ENCODE measurements at regions of chr7 and their contacts with region 1.

Region 1: DNA sequence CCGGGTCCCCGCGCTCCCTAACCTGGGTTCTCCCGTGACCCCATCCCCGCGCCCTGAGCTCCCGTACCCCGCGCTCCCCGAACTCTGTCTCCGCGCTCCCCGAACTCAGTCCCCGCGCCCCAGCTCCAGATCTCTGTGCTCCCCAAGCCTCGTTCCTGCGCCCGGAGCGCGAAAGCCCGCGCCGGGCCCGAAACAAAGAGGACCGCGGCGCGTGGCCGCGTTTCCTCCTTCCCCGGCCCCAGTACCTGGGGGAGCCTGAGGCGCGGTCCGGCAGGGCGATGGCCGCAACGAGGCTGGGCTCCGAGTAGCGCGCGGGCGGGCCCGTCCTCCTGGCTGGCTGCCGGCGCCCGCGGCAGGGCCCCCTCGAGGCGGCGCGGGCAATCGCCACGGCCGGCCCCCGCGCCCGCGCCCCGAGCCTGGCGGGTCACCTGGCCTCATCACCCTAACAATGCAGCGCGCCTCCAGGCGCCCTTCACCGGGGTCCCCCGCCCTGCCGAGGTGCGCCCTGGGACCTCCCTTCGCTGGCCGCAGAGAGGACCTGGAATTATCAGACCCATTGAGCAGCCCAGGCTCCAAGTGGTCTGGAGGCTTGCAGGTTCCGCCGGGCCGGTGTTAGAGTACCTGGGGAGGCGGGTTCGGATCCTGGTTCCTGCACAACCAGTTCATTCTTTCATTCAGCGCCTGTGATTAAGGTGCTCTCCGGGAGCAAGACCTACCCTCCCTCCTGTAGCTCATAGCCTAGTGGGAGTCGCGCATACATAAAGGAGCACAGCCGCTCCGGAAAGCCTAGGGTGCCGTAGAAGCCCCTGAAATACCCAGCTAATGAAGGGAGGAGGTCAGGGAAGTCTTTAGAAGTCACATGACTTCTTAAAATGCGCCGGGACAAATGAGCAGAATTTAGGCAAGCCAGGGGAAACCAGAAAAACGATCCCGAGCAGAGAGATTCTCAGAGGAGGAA is at the start of gene TNS3:
- DNase-seq: peak in 1 of 2 donors; percentile 73
- H3K4me3 ChIP-seq: peak within 1 kb of the TSS; percentile 75 to 82
- H3K27ac ChIP-seq: peak within 1 kb of the TSS; percentile 85 to 88
- H3K4me1 ChIP-seq: peaks cover 14 to 58% of the 10 kb centered on the region in 2 donors
- H3K27me3 ChIP-seq: no peaks in the 10 kb centered on the region
- CTCF ChIP-seq: peak in 1 of 3 experiments; percentile 60
- total RNA-seq, gene TNS3: 89.8 TPM

Region 2: DNA sequence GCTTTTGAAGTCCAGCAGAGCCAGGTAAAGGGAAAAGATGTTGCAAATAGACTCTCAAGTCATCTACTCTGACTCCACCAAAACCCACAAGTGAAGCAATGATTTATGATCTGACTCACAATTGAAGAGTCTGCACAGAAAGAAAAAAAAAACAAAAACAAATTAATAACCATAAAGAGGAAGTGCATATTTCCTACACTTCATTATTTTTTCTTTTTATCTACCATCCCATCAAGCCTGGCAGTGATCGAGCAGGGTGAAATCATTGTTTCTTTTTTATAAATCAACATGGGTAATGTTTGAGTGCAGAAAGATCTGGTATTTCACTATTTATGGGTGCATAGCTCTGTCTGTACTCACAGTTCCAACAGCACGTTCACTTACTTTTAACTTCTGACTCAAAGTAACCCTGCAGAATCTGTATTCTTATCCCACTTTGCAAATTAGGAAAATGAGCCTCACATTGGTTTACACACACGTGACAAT is 829.2 kb before region 1 on chr7:
- intact Hi-C with region 1: no loop called
- DNase-seq: no peak
- H3K4me3 ChIP-seq: no peak overlapping the region
- H3K27ac ChIP-seq: peak overlapping the region; percentile 83 to 84
- H3K4me1 ChIP-seq: peaks cover 9 to 39% of the 10 kb centered on the region in 2 donors
- H3K27me3 ChIP-seq: no peaks in the 10 kb centered on the region
- CTCF ChIP-seq: no peak

Region 3: GRCh38 chr7:47482013-47482875 is 99.8 kb before region 1 on chr7:
- intact Hi-C with region 1: loop called (anchors 5 kb)
- DNase-seq: peak; percentile 56 to 87
- H3K4me3 ChIP-seq: peak overlapping the region in 1 of 2 donors; percentile 37
- H3K27ac ChIP-seq: peak overlapping the region; percentile 82 to 85
- H3K4me1 ChIP-seq: peaks cover 19 to 66% of the 10 kb centered on the region in 2 donors
- H3K27me3 ChIP-seq: no peaks in the 10 kb centered on the region
- CTCF ChIP-seq: no peak

Region 4: DNA sequence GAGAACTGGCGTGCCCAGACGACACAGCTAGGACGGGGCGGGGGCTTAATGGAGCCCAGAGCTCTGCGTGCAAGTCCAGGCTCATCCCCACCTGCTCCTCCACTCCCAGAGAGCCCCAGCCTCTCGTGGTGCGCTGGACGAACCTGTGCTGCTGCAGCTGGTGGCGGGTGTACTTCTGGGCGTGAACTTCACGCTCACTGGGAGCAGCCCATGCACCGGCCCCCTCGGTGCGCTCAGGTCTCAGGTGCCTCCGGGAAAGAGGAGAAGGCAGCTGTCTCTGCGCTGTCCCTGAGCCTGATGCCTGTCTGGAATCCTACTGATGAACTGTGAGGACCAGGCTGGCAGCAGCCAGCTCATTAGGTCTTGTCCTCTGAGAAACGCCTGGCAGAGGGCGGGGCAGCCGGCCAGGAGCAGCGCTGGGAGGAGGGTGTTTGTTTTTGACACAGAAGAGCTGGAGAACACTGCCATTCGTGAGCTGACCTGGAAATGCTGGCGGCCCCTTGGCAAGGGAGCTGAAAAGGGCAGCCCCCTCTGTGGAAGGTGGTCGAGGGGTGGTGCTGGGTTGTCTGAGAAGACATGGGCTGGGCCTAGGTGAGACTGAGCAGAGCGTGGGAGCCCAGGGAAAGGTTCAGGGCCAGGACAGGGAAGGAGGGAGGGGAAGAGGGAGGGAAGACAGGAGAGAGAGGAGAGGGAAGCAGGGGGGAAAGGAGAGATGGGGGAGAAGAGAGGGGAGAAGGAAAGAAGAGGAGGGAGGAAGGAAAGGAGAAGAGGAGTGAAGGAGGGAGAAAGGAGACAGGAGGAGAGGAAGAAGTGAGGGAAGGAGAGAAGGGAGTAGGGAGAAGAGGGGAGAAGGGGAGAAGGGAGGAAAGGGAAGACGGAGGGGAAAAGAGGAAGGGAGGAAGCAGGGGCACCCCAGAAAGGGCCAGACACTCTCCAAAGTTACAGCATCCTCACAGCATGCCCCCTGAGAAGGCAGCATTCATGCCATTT is 53.3 kb after region 1 on chr7:
- intact Hi-C with region 1: loop called (anchors 2 kb)
- DNase-seq: peak in 1 of 2 donors; percentile 77
- H3K4me3 ChIP-seq: peak overlapping the region in 1 of 2 donors; percentile 35
- H3K27ac ChIP-seq: peak overlapping the region; percentile 83 to 85
- H3K4me1 ChIP-seq: peaks cover 18 to 31% of the 10 kb centered on the region in 2 donors
- H3K27me3 ChIP-seq: no peaks in the 10 kb centered on the region
- CTCF ChIP-seq: no peak

Region 5: GRCh38 chr7:47690902-47691558 is 108.9 kb after region 1 on chr7:
- intact Hi-C with region 1: loop called (anchors 5 kb)
- DNase-seq: no peak
- H3K4me3 ChIP-seq: no peak overlapping the region
- H3K27ac ChIP-seq: peak overlapping the region; percentile 75 to 77
- H3K4me1 ChIP-seq: peaks cover 3 to 28% of the 10 kb centered on the region in 2 donors
- H3K27me3 ChIP-seq: no peaks in the 10 kb centered on the region
- CTCF ChIP-seq: no peak

Region 6: GRCh38 chr7:47771336-47771989 is 189.4 kb after region 1 on chr7:
- intact Hi-C with region 1: loop called (anchors 5 kb)
- DNase-seq: peak in 1 of 2 donors; percentile 94
- H3K4me3 ChIP-seq: no peak overlapping the region
- H3K27ac ChIP-seq: peak overlapping the region; percentile 76 to 79
- H3K4me1 ChIP-seq: peaks cover 3 to 28% of the 10 kb centered on the region in 2 donors
- H3K27me3 ChIP-seq: no peaks in the 10 kb centered on the region
- CTCF ChIP-seq: peak in 2 of 3 experiments; percentile 32 to 37

Measured in ascending aorta (tissue), 2 donors.